GM10248 (cell line): ENCODE measurements at regions of chr14 and their contacts with region 1.

Region 1: GRCh38 chr14:80202888-80203562 is 8.3 kb downstream of the DIO2 start:
- DNase-seq: peak; percentile 18
- CTCF ChIP-seq: peak; percentile 34

Region 2: DNA sequence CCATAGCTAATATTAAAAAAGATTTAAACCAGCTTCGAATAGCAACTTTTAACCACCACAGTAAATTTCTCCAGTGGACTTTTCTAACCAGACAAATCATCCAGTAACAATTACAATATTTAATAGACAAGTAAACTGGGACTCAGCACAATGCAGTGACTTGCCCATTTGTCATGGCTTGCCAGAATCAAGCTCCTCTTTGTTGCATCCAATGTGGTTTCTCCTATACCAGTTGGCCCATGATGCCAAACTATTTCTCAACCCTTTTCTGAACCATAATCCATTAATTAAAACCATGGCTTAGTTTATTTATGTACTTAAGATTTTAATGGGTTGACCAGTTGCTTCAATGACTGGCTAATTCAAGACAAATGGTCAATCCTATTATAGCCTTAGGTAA is 56.1 kb before region 1 on chr14:
- CTCF ChIA-PET with region 1: no interaction called
- POLR2A ChIA-PET with region 1: no interaction called
- DNase-seq: no peak
- CTCF ChIP-seq: no peak

Region 3: GRCh38 chr14:80192993-80193392 is 10.0 kb before region 1 on chr14:
- CTCF ChIA-PET with region 1: interaction called, 10 read pairs
- POLR2A ChIA-PET with region 1: no interaction called
- DNase-seq: no peak
- CTCF ChIP-seq: no peak

Region 4: GRCh38 chr14:80213599-80213998 is 10.6 kb after region 1 on chr14:
- CTCF ChIA-PET with region 1: interaction called, 11 read pairs
- POLR2A ChIA-PET with region 1: no interaction called
- DNase-seq: peak; percentile 22
- CTCF ChIP-seq: peak; percentile 39